ENCODE measurements at regions of chr11 and their contacts with region 1.

Region 1: GRCh38 chr11:124920870-124921609 is 2.0 kb downstream of the HEPN1 start:
- DNase-seq: peak; percentile 91

Region 2: DNA sequence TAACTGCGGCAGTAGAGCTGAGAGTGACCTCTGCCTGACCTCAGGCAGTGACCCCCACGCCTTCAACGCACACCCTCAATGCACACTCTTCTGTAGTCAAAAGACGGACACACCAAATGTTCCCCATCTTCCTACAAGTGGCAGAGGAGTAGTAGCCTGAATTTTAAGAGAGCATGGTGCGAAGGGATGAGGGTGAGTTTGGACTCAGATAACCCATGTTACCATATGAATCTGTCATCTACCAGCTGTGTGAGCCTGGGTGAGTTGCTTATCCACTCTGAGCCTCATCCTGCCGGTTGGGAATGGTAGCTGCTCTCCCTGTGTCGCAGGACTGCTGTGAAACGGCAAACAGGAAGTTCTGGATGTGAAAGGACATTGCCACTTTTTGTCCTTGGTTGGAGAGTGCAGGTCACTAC is 76.4 kb before region 1 on chr11:
- intact Hi-C with region 1: loop called in 1 of 2 experiments (anchors 2 kb)
- DNase-seq: no peak

Region 3: DNA sequence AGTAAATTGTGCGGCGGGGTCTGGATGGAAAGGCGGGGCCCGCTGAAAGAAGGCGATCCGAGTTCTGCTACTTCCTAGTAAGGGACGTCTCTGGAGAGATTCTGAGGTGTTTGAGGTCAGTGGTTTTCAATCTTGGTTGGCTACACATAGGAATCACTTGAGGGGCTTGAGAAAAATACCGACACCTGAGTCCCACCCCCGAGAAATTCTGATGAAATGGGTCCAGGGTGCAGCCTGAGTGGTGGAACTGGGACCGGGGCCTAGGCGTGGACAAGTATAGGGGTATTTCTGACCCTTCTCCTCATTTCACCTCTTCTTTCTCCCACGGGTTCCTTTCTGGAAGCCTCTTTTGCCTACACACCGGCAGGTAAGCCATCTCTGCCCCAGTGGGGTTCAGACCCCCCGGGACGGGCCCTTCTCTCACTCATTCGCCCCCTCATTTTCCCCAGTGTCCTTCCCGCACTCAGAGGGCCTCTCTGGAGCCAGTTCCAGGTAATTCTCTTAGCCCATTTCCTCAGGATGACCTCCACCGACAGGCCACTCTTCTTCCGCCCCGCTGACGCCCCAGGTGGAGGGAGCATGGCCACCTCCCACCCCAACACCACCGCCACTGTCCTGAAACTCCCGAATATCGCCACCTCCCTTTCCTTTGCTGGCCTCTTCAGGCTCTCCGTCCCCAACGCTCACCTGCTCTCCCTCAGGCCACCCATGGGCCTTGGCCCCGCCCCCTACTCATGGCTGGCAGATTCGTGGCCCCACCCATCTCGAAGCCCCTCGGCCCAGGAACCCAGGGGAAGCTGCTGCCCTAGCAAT is 44.0 kb before region 1 on chr11:
- intact Hi-C with region 1: loop called in 1 of 2 experiments (anchors 1 kb)
- DNase-seq: no peak

Measured in posterior vena cava (tissue), 2 donors.